Endothelial cell of umbilical vein (primary cell): ENCODE measurements at regions of chr20 and their contacts with region 1.

Region 1: DNA sequence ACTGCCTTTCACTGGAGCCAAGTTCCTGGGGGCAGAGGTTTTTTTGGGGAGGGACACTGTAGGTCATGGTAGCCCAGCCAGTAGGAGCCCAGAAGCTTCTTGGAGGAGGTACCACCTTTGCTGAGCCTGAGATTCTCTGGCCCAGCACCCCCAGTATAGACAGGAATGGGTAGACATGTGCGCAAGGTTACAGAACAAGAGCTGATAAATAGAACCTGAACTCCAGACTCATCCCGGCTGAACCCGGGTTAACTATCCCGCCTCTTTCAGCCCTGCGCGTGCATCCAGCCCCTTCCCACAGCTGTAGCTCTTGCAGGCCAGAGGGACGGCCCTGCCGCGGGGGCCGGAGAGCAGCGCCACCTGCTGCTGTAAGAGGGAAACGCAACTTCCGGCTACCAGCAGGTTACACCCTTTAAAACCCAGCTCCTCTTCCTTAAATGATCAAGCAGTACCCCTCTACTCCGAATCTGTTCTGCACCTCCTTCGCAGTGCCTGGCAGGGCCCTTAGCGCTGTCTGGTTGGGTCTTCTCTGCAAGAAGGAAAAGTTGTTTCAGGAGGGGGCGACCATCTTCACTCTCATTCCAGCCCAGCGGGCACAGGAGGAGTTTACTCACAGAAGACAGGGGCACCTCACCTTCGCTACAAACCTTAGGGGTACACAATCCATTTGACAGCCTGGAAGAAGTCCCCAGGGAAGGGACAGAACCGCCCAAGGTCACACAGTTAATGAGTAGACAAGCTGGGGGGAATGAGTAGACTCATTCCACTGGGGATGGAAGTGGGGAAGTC is 7.5 kb downstream of the SRXN1 start:
- DNase-seq: peak; percentile 80
- H3K4me3 ChIP-seq: no peak overlapping the region
- H3K27ac ChIP-seq: no peak overlapping the region
- H3K4me1 ChIP-seq: no peaks in the 10 kb centered on the region
- H3K27me3 ChIP-seq: no peaks in the 10 kb centered on the region
- CTCF ChIP-seq: peak; percentile 94 to 98
- POLR2A ChIP-seq: peak; percentile 38

Region 2: GRCh38 chr20:496126-496696 is 149.3 kb before region 1 on chr20:
- CTCF ChIA-PET with region 1: interaction called, 14 read pairs
- POLR2A ChIA-PET with region 1: no interaction called
- dilution Hi-C with region 1: no loop called
- intact Hi-C with region 1: no loop called
- DNase-seq: no peak
- H3K4me3 ChIP-seq: no peak overlapping the region
- H3K27ac ChIP-seq: no peak overlapping the region
- H3K4me1 ChIP-seq: no peaks in the 10 kb centered on the region
- H3K27me3 ChIP-seq: no peaks in the 10 kb centered on the region
- CTCF ChIP-seq: no peak
- POLR2A ChIP-seq: no peak

Region 3: DNA sequence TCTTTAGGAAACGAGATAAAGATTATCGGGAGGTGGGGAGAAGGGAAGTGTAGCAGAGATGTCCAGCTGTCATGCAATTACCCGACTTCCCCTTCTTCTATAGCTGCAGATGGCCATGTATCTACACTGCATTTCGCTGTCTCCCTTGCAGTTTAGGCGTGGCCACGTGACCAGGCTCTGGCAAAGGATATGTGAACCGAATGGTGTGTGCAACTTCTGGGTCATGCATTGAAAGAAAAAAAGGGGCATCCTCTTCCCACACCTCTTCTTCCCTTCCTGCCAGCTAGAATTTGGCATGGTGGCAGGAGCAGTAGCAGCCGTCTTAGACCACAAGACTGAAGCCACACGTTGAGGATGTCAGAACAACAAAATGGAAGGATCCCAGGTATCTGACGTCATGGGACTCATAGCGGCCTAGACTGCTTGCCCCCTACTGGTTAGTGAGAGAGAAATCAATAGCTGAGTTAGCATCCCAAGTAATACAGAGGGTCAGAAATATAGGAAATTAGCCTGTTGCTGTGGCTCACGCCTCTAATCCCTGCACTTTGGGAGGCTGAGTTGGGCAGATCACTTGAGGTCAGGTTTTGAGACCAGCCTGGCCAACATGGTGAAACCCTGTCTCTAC is 68.2 kb before region 1 on chr20:
- CTCF ChIA-PET with region 1: interaction called, 93 read pairs
- POLR2A ChIA-PET with region 1: interaction called, 3 read pairs
- dilution Hi-C with region 1: no loop called
- intact Hi-C with region 1: no loop called
- DNase-seq: peak; percentile 71
- H3K4me3 ChIP-seq: no peak overlapping the region
- H3K27ac ChIP-seq: no peak overlapping the region
- H3K4me1 ChIP-seq: peaks cover 47% of the 10 kb centered on the region
- H3K27me3 ChIP-seq: peaks cover 0 to 6% of the 10 kb centered on the region in 2 experiments
- CTCF ChIP-seq: peak; percentile 25 to 45
- POLR2A ChIP-seq: no peak

Region 4: GRCh38 chr20:602111-602970 is 43.2 kb before region 1 on chr20:
- CTCF ChIA-PET with region 1: interaction called, 18 read pairs
- POLR2A ChIA-PET with region 1: no interaction called
- dilution Hi-C with region 1: no loop called
- intact Hi-C with region 1: no loop called
- DNase-seq: peak; percentile 27
- H3K4me3 ChIP-seq: no peak overlapping the region
- H3K27ac ChIP-seq: no peak overlapping the region
- H3K4me1 ChIP-seq: no peaks in the 10 kb centered on the region
- H3K27me3 ChIP-seq: peaks cover 0 to 2% of the 10 kb centered on the region in 2 experiments
- CTCF ChIP-seq: no peak
- POLR2A ChIP-seq: no peak

Region 5: DNA sequence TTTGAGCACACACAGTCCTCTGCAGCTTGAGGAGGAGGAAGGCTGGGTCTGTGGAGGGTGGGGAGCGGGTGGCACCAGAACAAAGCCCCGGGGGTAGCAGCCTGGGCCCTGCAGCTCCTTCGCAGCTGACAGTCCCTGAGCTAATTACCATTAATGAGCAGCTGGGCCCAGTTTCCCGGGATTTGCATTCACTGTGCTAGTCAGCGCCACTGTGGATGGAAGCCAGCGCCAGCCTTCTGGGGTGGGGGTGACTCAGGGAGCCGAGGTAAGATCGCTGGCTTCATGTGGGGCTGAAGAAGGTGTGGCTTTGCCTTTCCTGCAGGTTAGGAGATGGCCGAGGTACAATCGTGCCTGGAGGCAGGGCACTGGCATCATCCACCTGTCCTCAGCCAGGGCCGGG is 11.0 kb before region 1 on chr20:
- CTCF ChIA-PET with region 1: interaction called, 11 read pairs
- POLR2A ChIA-PET with region 1: no interaction called
- dilution Hi-C with region 1: no loop called
- intact Hi-C with region 1: no loop called
- DNase-seq: no peak
- H3K4me3 ChIP-seq: no peak overlapping the region
- H3K27ac ChIP-seq: no peak overlapping the region
- H3K4me1 ChIP-seq: no peaks in the 10 kb centered on the region
- H3K27me3 ChIP-seq: peaks cover 4 to 6% of the 10 kb centered on the region in 2 experiments
- CTCF ChIP-seq: no peak
- POLR2A ChIP-seq: no peak

Region 6: DNA sequence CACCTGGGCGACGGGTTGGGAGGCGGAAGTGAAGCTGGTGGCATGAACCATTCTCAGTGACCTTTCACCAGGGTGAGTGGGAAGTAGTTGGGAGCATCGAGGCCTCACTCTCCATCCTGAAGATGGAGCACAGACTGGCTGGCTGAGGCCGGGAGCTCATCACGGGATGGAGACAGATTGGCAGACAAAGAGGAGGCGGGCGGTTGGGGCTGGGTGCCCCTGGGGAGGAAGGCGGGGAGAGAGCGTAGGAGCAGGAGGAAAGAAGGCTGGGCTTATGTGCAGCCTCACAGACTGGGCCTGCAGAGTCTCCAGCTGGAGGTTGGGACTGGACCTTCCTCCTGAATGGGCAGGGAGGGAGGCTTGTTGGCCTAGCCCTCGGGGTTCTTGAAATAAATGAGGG is 74.3 kb after region 1 on chr20:
- CTCF ChIA-PET with region 1: no interaction called
- POLR2A ChIA-PET with region 1: no interaction called
- dilution Hi-C with region 1: no loop called
- intact Hi-C with region 1: no loop called
- DNase-seq: no peak
- H3K4me3 ChIP-seq: no peak overlapping the region
- H3K27ac ChIP-seq: no peak overlapping the region
- H3K4me1 ChIP-seq: no peaks in the 10 kb centered on the region
- H3K27me3 ChIP-seq: peaks cover 2 to 4% of the 10 kb centered on the region in 2 experiments
- CTCF ChIP-seq: no peak
- POLR2A ChIP-seq: no peak

Region 7: DNA sequence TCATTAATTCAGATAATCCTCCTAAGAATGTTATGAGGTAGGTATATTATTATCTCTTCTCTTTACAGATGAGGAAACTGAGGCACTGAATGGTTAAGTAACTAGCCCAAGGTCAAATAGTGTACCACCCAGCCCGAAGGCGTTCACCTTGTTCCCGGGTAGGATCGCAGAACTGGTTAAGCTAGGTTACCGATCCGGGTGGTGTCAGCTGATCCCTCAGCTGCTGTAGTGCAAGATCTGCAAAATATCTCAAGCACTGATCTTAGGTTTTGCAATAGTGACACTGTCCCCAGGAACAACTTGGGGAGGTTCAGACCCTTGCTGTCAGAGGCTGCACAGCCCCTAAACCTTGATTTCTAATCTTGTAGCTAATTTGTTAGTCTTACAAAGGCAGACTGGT is 94.6 kb after region 1 on chr20:
- CTCF ChIA-PET with region 1: interaction called, 15 read pairs
- POLR2A ChIA-PET with region 1: no interaction called
- dilution Hi-C with region 1: no loop called
- intact Hi-C with region 1: no loop called
- DNase-seq: no peak
- H3K4me3 ChIP-seq: no peak overlapping the region
- H3K27ac ChIP-seq: no peak overlapping the region
- H3K4me1 ChIP-seq: no peaks in the 10 kb centered on the region
- H3K27me3 ChIP-seq: peaks cover 0 to 2% of the 10 kb centered on the region in 2 experiments
- CTCF ChIP-seq: no peak
- POLR2A ChIP-seq: no peak

Region 8: GRCh38 chr20:775679-776135 is 130.2 kb after region 1 on chr20:
- CTCF ChIA-PET with region 1: no interaction called
- POLR2A ChIA-PET with region 1: no interaction called
- dilution Hi-C with region 1: no loop called
- intact Hi-C with region 1: no loop called
- DNase-seq: no peak
- H3K4me3 ChIP-seq: no peak overlapping the region
- H3K27ac ChIP-seq: no peak overlapping the region
- H3K4me1 ChIP-seq: no peaks in the 10 kb centered on the region
- H3K27me3 ChIP-seq: peaks cover 4% of the 10 kb centered on the region in 2 experiments
- CTCF ChIP-seq: no peak
- POLR2A ChIP-seq: no peak